Prostate gland (tissue), 2 donors: ENCODE measurements at regions of chr5 and their contacts with region 1.

Region 1: GRCh38 chr5:95646554-95647431 is at the start of gene RFESD:
- DNase-seq: peak; percentile 98
- H3K4me3 ChIP-seq: peak within 1 kb of the TSS; percentile 26 to 43
- H3K27ac ChIP-seq: peak within 1 kb of the TSS; percentile 96 to 98
- H3K4me1 ChIP-seq: peaks cover 6% of the 10 kb centered on the region
- H3K27me3 ChIP-seq: no peaks in the 10 kb centered on the region
- CTCF ChIP-seq: peak in 2 of 4 experiments; percentile 12 to 56
- POLR2A ChIP-seq: peak; percentile 94
- total RNA-seq, gene RFESD: 4.0 to 14.8 TPM

Region 2: DNA sequence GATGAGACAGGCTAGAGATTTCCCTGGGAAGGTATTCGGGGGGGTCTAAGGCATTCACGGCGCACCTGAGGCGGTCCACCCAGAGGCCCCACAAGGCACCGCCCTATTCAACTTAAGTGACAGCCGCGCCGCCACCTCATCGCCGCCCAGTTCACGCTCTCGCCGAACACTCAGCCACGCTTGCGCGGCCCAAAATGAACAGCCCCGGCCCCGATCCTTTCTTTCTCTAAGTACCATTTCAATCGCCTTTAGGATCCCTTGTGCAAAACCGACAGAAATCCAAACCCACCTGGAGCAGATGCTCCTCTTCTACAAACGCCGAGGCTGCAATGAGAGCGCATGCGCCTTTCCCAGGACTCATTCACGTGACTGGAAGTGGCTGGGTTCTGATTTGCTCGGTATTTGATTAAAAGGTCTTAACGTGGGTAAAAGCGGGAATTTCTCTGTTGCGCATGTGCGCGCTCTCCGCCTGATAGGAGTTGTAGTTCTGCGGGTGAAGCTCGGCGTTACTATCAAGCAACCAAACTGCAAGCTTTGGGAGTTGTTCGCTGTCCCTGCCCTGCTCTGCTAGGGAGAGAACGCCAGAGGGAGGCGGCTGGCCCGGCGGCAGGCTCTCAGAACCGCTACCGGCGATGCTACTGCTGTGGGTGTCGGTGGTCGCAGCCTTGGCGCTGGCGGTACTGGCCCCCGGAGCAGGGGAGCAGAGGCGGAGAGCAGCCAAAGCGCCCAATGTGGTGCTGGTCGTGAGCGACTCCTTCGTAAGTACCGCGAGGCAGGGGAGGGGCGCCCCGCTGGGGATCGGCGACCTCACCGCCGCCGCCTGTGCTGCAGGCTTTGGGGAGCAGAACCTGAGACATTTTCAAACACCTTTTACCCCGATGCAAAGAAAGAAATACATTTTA is 91.9 kb before region 1 on chr5 and contains the starts of genes ARSK and SKIC3:
- intact Hi-C with region 1: loop called (anchors 2 kb)
- DNase-seq: peak; percentile 96
- H3K4me3 ChIP-seq: peak within 1 kb of the TSS; percentile 76 to 84
- H3K27ac ChIP-seq: peak within 1 kb of the TSS; percentile 92 to 94
- H3K4me1 ChIP-seq: no peaks in the 10 kb centered on the region
- H3K27me3 ChIP-seq: no peaks in the 10 kb centered on the region
- CTCF ChIP-seq: peak in 2 of 4 experiments; percentile 50 to 52
- POLR2A ChIP-seq: peak; percentile 83
- total RNA-seq, gene ARSK: 7.3 to 23.3 TPM
- total RNA-seq, gene SKIC3: 44.9 to 73.9 TPM

Region 3: DNA sequence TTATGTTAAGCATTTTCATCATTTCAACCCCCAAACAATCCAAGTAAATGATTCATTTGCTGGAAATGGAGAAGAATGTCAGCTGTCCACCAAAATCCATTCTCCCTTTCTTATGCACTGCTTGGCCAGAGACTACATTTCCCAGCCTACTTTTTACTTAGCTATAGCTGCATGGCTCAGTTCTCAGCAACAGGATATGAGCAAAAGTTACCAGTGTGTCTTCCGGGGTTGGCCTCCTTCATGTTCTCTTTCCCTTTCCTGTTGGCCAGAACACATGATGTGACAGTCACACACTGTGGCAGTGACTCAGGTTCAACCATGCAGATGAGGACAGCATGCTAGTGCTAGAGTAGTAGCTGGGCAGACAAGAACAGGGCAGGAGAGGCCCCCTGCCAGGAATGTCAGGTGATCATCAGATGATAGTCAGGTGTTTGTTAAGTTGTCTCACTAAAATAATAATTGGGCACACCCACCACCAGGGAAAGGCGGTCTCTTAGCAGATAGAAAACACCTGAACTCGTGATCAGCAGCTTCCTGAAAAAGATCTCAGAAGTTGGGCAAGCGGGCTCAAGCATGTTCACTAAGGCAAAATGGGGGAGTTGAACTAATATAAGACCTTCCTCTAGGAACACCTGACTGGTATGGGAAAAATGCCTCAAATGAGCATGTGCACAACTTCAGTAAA is 14.7 kb before region 1 on chr5:
- intact Hi-C with region 1: no loop called
- DNase-seq: no peak
- H3K4me3 ChIP-seq: no peak overlapping the region
- H3K27ac ChIP-seq: no peak overlapping the region
- H3K4me1 ChIP-seq: no peaks in the 10 kb centered on the region
- H3K27me3 ChIP-seq: no peaks in the 10 kb centered on the region
- CTCF ChIP-seq: no peak
- POLR2A ChIP-seq: no peak

Region 4: GRCh38 chr5:95781101-95781583 is 134.3 kb after region 1 on chr5:
- intact Hi-C with region 1: loop called (anchors 5 kb)
- DNase-seq: peak; percentile 85
- H3K4me3 ChIP-seq: no peak overlapping the region
- H3K27ac ChIP-seq: peak overlapping the region; percentile 66 to 75
- H3K4me1 ChIP-seq: no peaks in the 10 kb centered on the region
- H3K27me3 ChIP-seq: no peaks in the 10 kb centered on the region
- CTCF ChIP-seq: peak; percentile 79 to 95 (median 86)
- POLR2A ChIP-seq: no peak

Region 5: GRCh38 chr5:95858661-95859326 is 212.0 kb after region 1 on chr5:
- intact Hi-C with region 1: loop called (anchors 5 kb)
- DNase-seq: peak; percentile 80
- H3K4me3 ChIP-seq: peak overlapping the region; percentile 7 to 14
- H3K27ac ChIP-seq: peak overlapping the region; percentile 75 to 78
- H3K4me1 ChIP-seq: peaks cover 3% of the 10 kb centered on the region
- H3K27me3 ChIP-seq: no peaks in the 10 kb centered on the region
- CTCF ChIP-seq: peak; percentile 92 to 99 (median 98)
- POLR2A ChIP-seq: peak; percentile 36

Region 6: DNA sequence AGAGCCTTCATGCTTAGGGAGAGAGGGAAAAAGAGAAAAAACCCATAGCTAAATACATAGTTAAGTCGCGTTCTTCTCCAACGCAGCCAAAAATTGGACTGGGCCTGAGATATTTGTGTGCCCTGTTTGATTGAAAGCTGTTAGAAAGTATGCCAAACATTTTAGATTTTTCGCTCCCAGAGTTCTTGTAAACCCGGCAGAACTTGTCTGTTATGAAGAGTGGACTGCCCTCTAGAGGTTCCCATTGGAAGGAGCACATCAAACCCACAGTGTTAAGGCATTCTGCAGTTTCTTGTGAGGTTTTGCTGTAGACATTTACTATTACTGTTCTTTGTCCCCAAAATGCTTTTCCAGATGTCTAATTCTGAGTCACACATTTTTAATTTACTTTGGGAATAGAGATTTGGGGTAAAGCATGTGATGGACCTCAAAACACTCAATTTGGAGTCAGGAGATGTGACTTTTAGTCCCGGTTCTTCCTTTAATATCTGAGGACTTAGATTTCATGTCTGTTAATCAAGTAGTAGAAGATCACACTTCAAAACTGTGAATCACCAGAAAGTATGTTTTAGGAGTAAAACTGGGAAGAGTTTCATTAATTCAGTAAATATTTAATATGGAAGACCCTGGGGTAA is 689.7 kb after region 1 on chr5:
- intact Hi-C with region 1: loop called (anchors 5 kb)
- DNase-seq: peak; percentile 85
- H3K4me3 ChIP-seq: no peak overlapping the region
- H3K27ac ChIP-seq: peak overlapping the region; percentile 54 to 73
- H3K4me1 ChIP-seq: peaks cover 27% of the 10 kb centered on the region
- H3K27me3 ChIP-seq: no peaks in the 10 kb centered on the region
- CTCF ChIP-seq: peak; percentile 75 to 95 (median 90)
- POLR2A ChIP-seq: no peak